ENCODE measurements at regions of chr11 and their contacts with region 1.

Region 1: DNA sequence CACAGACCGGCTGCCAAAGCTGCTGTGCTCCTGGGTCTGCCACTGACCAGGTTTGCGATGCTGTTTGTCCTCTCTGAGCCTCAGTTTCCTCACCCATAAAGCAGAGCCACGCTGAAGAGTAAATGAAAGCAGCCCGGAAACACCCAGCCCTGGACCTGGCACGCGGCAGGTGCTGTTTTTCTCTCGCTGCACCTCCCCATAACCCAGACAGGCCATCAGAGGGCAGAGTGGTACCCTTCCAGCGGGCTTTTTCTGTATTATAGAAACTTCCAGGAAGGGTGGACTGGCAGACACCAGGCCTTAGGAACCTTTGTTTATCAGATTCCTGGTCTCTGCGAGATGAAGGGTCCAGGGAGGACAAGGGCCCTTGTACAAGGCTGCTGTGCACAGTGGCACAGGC is 17.9 kb upstream of the FGF19 start:
- DNase-seq: no peak
- H3K4me3 ChIP-seq: no peak overlapping the region
- H3K27me3 ChIP-seq: peaks cover 50% of the 10 kb centered on the region
- CTCF ChIP-seq: 0 out of 2 replicates have a peak, but pooled peaks have one; percentile 18

Region 2: DNA sequence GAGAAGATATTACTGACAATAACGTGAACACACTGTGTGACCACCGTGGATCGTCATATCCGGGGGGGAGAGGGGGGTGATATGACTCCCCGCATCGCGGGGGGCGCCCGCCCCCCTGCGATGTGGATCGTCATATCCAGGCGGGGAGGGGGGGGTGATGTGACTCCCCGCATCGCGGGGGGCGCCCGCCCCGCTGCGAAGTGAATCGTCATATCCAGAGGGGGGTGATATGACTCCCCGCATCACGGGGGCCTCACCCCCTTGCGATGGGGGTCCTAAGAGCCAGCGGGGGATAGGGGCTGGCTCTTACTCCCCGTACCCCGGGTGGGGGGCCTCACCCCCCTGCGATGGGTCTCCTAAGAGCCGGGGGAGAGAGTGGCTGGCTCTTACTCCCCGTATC is 1737.8 kb before region 1 on chr11:
- CTCF ChIA-PET with region 1: no interaction called
- POLR2A ChIA-PET with region 1: no interaction called
- DNase-seq: no peak
- H3K4me3 ChIP-seq: no peak overlapping the region
- H3K27me3 ChIP-seq: no peaks in the 10 kb centered on the region; the same call in 1 of the 2 replicates
- CTCF ChIP-seq: no peak

Region 3: DNA sequence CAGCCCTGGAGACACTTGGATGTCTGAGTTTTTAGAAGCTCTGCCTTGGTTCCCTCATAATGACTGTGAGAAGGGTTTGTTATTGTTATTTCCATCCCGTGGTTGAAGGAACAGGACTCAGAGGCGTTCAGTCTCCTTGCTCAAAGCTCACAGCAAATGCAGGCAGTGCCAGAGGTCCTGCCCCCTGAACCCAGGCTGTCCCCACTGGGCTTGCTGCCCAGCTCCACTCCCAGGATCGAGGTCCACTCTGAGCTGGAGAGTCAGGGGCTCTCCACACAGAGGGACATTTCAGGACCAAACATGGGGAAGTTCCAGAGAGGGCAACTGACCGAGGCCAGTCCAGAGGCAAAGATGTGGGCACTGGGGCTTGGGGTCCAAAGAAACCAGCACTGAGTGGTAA is 38.6 kb after region 1 on chr11:
- CTCF ChIA-PET with region 1: no interaction called
- POLR2A ChIA-PET with region 1: no interaction called
- DNase-seq: no peak
- H3K4me3 ChIP-seq: no peak overlapping the region
- H3K27me3 ChIP-seq: peaks cover 4% of the 10 kb centered on the region; the same call in 1 of the 2 replicates
- CTCF ChIP-seq: no peak

Region 4: GRCh38 chr11:69801519-69802335 is 80.0 kb after region 1 on chr11:
- CTCF ChIA-PET with region 1: interaction called, 11 read pairs
- POLR2A ChIA-PET with region 1: no interaction called
- DNase-seq: no peak
- H3K4me3 ChIP-seq: no peak overlapping the region
- H3K27me3 ChIP-seq: no peaks in the 10 kb centered on the region
- CTCF ChIP-seq: peak; percentile 86

Measured in BJ (cell line).